Activated naive CD4-positive, alpha-beta T cell treated with anti-CD3 and anti-CD28 coated beads for 36 hours (primary cell): ENCODE measurements at regions of chrX and their contacts with region 1.

Region 1: DNA sequence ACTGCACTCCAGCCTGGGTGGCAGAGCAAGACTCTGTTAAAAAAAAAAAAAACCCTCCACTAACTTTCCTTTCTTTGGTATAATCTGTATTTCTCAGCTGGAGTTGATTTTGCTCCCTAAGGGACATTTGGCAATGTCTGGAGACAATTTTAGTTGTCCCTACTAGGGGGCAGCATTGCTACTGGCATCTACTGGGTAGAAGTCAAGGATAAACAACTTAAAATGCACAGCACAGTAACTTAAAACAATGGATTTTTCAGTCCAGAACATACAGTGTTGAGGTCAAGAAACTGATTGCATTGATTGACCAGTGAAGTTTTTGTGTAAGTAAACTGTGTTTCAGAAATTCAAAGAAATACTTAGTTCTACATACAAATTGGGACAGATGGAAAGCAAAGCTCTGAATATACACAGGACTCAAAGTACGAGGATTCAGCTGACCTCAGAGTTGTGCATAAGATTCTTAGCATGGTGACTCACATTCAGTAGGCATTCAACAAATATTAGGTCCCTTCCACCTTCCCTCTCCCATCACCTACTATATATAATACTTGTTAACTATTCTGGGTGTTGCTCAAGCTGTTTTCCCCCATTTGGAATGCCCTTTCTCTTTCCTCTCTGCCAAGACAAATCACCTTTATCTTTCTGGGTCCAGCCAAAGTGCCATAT is 8.8 kb downstream of the DDX53 start:
- DNase-seq: no peak
- H3K4me3 Mint-ChIP-seq: no peak overlapping the region
- H3K27ac Mint-ChIP-seq: no peak overlapping the region
- H3K4me1 Mint-ChIP-seq: peaks cover 10% of the 10 kb centered on the region
- H3K27me3 Mint-ChIP-seq: no peaks in the 10 kb centered on the region

Region 2: DNA sequence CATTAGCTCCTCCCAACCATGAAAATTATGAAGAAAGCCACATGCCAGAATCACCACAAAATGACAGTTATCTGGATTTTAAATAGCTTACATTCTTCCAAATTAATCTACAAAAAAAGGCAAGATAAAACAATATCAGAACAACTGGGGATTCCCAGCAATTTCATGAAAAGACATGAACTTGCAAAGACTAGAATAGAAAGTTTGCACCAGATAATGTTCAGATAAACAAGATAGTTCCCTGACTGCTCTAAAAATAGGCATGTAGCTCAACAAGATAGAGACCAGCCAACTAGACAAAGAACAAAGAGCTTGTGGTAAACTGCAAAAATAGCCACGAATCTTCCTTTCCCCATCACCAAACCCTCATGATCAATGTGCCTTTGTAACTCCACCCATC is 39.2 kb before region 1 on chrX:
- CTCF ChIA-PET with region 1: no interaction called
- intact Hi-C with region 1: no loop called
- DNase-seq: no peak
- H3K4me3 Mint-ChIP-seq: no peak overlapping the region
- H3K27ac Mint-ChIP-seq: no peak overlapping the region
- H3K4me1 Mint-ChIP-seq: no peaks in the 10 kb centered on the region
- H3K27me3 Mint-ChIP-seq: no peaks in the 10 kb centered on the region

Region 3: GRCh38 chrX:23554304-23554703 is 545.7 kb after region 1 on chrX:
- CTCF ChIA-PET with region 1: no interaction called
- intact Hi-C with region 1: loop called (anchors 5 kb)
- DNase-seq: no peak
- H3K4me3 Mint-ChIP-seq: no peak overlapping the region
- H3K27ac Mint-ChIP-seq: no peak overlapping the region
- H3K4me1 Mint-ChIP-seq: no peaks in the 10 kb centered on the region
- H3K27me3 Mint-ChIP-seq: peaks cover 4% of the 10 kb centered on the region

Region 4: DNA sequence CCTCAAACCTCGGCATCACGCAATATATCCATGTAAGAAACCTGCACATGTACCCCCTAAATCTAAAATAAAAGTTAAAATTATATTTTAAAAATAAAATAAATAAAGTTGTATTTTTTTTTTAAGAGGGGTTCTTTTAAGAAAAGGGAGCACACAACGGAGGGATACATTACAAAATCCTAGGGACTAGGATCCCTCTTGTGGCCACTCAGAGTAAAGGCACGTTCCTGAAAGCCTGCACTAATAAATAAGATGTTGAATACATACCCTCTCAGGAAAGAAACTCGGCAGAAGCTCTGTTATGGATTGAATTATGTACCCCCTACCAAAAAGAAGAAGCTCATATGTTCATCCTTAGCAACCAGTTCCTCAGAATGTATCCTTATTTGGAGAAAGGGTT is 607.8 kb after region 1 on chrX:
- CTCF ChIA-PET with region 1: no interaction called
- intact Hi-C with region 1: loop called (anchors 1 kb)
- DNase-seq: no peak
- H3K4me3 Mint-ChIP-seq: no peak overlapping the region
- H3K27ac Mint-ChIP-seq: no peak overlapping the region
- H3K4me1 Mint-ChIP-seq: no peaks in the 10 kb centered on the region
- H3K27me3 Mint-ChIP-seq: no peaks in the 10 kb centered on the region